ENCODE measurements at regions of chr2 and their contacts with region 1.

Region 1: GRCh38 chr2:28761420-28761819 is 9.8 kb downstream of the PPP1CB start:
- DNase-seq: no peak
- ATAC-seq: no peak
- H3K4me3 Mint-ChIP-seq: no peak overlapping the region
- H3K27ac Mint-ChIP-seq: no peak overlapping the region
- H3K4me1 Mint-ChIP-seq: peaks cover 61% of the 10 kb centered on the region
- H3K27me3 Mint-ChIP-seq: no peaks in the 10 kb centered on the region
- CTCF ChIP-seq: no peak

Region 2: DNA sequence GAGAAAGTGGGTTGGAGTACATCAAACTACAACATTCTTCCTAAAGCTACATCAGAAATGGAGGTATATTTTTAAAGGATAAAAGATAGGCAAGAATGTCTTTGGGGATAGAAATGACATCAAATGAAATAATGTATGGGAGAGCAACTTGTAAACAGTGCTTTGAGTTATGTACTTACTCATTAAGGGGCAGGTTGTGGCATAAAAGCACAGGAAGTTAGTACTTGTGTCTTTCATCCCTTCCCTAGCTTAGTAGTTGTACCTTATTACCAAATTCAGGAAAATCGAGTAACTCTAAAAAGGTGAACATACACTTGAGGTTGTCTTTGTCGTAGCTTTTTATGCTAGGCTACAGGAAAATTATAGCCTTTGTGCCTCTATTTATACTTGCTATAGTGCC is 19.1 kb after region 1 on chr2:
- CTCF ChIA-PET with region 1: no interaction called
- POLR2A ChIA-PET with region 1: no interaction called
- intact Hi-C with region 1: loop called (anchors 2 kb)
- DNase-seq: no peak
- ATAC-seq: no peak
- H3K4me3 Mint-ChIP-seq: no peak overlapping the region
- H3K27ac Mint-ChIP-seq: no peak overlapping the region
- H3K4me1 Mint-ChIP-seq: peaks cover 10% of the 10 kb centered on the region
- H3K27me3 Mint-ChIP-seq: no peaks in the 10 kb centered on the region
- CTCF ChIP-seq: no peak

Region 3: GRCh38 chr2:28880193-28880592 is 118.8 kb after region 1 on chr2:
- CTCF ChIA-PET with region 1: no interaction called
- POLR2A ChIA-PET with region 1: no interaction called
- intact Hi-C with region 1: no loop called
- DNase-seq: no peak
- ATAC-seq: no peak
- H3K4me3 Mint-ChIP-seq: no peak overlapping the region
- H3K27ac Mint-ChIP-seq: no peak overlapping the region
- H3K4me1 Mint-ChIP-seq: no peaks in the 10 kb centered on the region
- H3K27me3 Mint-ChIP-seq: peaks cover 16% of the 10 kb centered on the region
- CTCF ChIP-seq: no peak